ENCODE measurements at regions of chr4 and their contacts with region 1.

Region 1: DNA sequence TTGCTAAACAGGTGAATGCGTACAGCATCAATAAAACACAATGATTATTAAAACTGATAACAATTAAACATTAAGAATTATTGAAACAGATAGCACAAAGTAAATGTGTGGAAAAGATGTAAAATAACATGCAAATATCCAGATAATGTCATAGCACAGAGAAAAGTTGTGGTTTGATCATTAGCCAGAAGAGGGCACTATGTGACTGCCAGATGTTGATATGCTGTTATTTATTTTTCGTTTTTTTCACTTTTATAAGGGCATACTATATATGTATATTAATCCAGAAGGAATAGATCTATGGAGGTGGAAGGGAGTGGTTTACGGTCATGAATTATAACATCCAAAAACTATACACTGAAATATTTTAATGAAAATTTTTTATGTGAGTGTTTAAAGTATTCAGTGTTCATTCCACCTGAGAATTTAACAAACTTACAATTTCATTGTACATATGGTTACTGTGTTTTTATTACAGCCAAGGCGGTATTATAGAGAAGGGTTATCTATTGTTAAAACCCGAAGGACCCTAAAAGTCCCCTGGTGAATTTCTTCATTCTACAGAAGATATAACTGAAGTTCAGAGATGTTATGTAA is 211.9 kb upstream of the UGT8 start:
- DNase-seq: peak; percentile 49
- H3K4me3 ChIP-seq: no peak overlapping the region
- H3K27ac ChIP-seq: no peak overlapping the region
- H3K4me1 ChIP-seq: peaks cover 6% of the 10 kb centered on the region
- H3K27me3 ChIP-seq: no peaks in the 10 kb centered on the region
- CTCF ChIP-seq: peak; percentile 81

Region 2: DNA sequence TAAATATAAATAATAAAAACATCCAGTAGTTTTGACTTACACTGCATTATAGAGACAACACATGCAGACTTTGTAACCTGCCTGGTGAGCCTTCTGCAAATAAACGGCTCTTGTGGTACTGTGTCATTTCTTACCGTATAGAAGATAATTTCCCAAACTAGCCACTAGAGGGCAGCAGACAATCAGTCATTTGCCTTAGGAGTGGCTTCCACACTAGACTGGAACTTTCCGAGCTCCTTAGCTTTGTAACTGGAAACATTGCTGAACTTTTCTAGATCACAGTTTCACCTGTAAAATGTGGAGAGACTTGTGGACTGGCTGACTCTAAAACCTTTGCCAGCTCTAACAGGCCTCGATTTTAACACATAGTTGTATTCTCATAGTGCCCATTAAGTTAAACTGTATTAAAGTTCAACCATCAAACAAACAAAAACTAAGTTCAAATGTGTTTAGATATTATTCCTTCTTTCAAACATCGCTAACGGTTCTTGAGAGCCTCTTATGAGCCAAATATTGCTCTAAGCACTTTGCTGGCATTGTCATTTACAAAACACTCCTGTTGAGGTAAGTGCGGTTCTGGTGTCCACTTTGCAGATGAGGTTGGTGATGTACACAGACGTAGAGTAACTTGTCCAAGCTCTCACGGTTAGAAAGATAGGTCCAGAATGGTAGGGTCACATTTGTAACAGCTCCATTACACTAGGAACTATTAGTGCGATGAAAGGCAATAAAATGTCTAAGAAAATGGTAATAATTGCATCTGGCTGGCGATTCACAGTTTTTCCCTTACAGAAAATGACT is 991.8 kb before region 1 on chr4:
- CTCF ChIA-PET with region 1: interaction called, 4 read pairs
- POLR2A ChIA-PET with region 1: no interaction called
- intact Hi-C with region 1: loop called (anchors 2 kb)
- DNase-seq: peak; percentile 92
- H3K4me3 ChIP-seq: no peak overlapping the region
- H3K27ac ChIP-seq: no peak overlapping the region
- H3K4me1 ChIP-seq: peaks cover 4% of the 10 kb centered on the region
- H3K27me3 ChIP-seq: no peaks in the 10 kb centered on the region
- CTCF ChIP-seq: peak; percentile 79

Region 3: GRCh38 chr4:113657586-113658233 is 729.0 kb before region 1 on chr4:
- CTCF ChIA-PET with region 1: no interaction called
- POLR2A ChIA-PET with region 1: no interaction called
- intact Hi-C with region 1: no loop called
- DNase-seq: no peak
- H3K4me3 ChIP-seq: no peak overlapping the region
- H3K27ac ChIP-seq: no peak overlapping the region
- H3K4me1 ChIP-seq: peaks cover 12% of the 10 kb centered on the region
- H3K27me3 ChIP-seq: no peaks in the 10 kb centered on the region
- CTCF ChIP-seq: no peak

Region 4: DNA sequence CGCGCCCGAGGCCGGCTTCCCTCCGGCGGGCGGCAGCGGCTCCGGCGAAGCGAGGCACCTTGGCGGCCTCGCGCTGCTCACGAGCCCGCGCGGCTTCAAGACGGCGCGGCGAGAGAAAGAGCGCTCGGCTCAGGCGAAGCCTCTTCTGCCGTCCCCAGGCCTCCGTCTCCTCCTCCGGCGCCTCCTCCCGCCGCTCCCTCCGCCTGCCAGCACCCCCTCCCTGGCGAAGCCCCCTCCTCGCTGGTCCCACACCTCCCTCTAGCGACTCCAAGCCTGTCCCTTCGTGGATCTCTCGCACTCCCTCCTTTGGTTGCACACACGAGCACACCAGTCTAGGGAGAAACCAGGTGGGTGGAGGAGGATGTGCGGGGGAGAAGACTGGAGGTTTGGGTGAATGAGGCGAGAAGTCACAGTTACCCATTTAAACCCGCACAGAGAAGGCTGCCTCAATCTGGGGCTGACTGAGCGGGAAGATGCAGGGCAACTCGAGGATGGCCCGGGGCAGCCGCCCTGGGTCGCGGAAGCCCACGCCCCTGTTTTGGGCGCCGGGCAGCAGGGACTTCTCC is 625.0 kb before region 1 on chr4 and contains the start of gene CAMK2D:
- CTCF ChIA-PET with region 1: no interaction called
- POLR2A ChIA-PET with region 1: no interaction called
- intact Hi-C with region 1: loop called (anchors 5 kb)
- DNase-seq: peak; percentile 95
- H3K4me3 ChIP-seq: peak within 1 kb of the TSS; percentile 84
- H3K27ac ChIP-seq: peak within 1 kb of the TSS; percentile 99
- H3K4me1 ChIP-seq: peaks cover 32% of the 10 kb centered on the region
- H3K27me3 ChIP-seq: no peaks in the 10 kb centered on the region
- CTCF ChIP-seq: peak; percentile 82
- total RNA-seq, gene CAMK2D: 34.7 and 35.8 TPM in 2 replicates

Region 5: DNA sequence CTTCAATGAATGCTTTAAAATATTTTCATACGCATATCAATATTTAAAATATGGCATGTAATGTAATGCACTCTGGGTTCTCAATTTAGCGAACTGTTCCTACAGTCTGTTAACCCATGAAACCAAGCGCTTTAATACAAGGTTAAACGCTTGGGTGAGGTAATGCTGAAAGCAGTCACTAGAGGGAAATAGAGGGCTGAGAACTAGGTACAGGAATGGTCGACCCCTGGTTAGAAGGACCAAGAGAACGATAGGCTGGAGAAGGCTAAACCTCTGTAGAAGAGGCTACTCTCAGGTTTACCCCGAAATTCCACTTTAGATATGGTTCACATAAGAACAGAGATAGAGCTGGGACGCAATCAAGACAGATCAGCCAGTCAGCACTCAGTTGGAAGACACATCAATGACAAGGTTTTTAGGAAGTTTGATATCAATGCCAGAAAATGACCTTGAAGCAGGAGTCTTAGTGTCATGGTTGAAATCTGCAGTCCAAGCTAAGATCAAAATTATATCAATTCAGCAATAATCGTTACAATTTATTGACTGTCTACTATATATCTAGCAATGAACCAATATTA is 434.2 kb before region 1 on chr4:
- CTCF ChIA-PET with region 1: interaction called, 3 read pairs
- POLR2A ChIA-PET with region 1: no interaction called
- intact Hi-C with region 1: loop called (anchors 2 kb)
- DNase-seq: peak; percentile 82
- H3K4me3 ChIP-seq: no peak overlapping the region
- H3K27ac ChIP-seq: no peak overlapping the region
- H3K4me1 ChIP-seq: peaks cover 59% of the 10 kb centered on the region
- H3K27me3 ChIP-seq: no peaks in the 10 kb centered on the region
- CTCF ChIP-seq: peak; percentile 93

Region 6: DNA sequence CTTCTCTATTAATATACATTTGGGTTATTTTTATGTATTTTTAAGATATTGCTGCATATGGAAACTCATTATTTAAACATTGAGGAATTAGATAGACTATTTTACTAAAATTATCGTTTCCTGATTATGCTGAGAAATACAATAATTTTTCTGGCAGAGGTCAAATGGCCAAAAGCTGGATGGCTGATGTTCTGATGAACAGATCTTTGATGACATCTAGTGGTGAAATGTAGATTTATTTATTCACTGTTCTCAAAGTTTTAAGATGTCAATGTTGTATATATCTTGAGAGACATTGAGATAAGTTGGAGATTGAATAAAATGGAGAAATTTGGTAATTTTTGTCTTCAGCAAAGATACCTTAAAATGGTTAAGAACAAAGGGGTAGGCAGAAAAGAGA is 308.0 kb after region 1 on chr4:
- CTCF ChIA-PET with region 1: no interaction called
- POLR2A ChIA-PET with region 1: no interaction called
- intact Hi-C with region 1: loop called (anchors 2 kb)
- DNase-seq: peak; percentile 51
- H3K4me3 ChIP-seq: no peak overlapping the region
- H3K27ac ChIP-seq: no peak overlapping the region
- H3K4me1 ChIP-seq: peaks cover 6% of the 10 kb centered on the region
- H3K27me3 ChIP-seq: no peaks in the 10 kb centered on the region
- CTCF ChIP-seq: peak; percentile 66